ENCODE measurements at regions of chr3 and their contacts with region 1.

Region 1: DNA sequence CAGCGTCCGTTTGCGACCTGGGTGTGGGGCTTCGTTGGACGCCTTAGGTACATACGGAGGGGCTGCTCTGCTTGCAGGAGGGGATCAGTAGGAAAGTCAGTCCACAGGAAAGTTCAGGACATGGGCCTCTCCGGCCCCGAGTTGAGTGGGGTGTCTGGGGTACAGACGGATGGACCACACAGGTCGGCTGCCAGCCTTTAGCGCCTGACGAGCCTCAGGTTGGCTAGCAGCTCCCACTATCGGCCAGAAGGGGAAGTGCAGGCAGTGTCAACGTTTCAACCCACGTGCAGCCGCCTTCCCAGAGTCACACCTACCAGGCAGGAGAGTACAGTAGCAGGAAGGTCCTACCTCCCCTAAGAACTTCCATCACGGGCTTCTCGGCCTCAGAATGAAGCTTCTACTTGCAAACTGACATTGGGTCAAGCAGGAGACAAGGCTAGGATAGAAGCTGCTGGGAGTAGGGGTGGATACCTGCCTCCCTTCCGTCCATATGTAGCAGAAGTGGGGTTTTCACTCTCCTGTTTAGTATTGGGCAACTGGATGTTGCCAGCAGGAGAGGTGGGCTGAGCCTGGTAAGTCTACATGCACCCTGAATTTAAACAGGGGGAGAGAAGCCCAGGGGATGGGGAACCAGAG is 1.8 kb upstream of the SCN5A start:
- DNase-seq: peak; percentile 45 to 70
- H3K4me3 ChIP-seq: no peak overlapping the region
- H3K27ac ChIP-seq: no peak overlapping the region
- H3K4me1 ChIP-seq: peaks cover 0 to 26% (median 18%) of the 10 kb centered on the region in 4 donors
- H3K27me3 ChIP-seq: peaks cover 0 to 49% of the 10 kb centered on the region in 2 donors
- CTCF ChIP-seq: peak; percentile 87 to 93

Region 2: DNA sequence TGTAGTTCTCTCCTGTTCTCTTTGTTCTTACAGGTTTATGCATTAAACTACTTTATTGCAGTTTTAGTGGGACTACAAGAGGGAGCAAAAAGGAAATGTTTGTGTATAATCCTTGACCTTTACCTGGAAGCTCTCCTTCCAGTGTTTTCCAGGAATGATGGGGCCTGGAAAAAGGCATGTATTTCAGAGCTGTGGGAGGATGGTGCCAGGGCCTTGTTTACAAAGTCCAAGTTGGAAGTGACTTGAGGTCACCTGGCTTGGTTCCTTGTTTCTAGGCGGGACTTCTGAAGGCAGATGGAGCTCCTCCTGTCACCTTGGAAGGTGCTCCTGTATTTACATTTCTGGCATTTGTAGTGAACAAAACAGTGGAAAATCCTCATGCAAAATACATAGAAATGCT is 182.5 kb before region 1 on chr3:
- intact Hi-C with region 1: no loop called
- DNase-seq: no peak
- H3K4me3 ChIP-seq: no peak overlapping the region
- H3K27ac ChIP-seq: no peak overlapping the region
- H3K4me1 ChIP-seq: peaks cover 0 to 14% (median 4%) of the 10 kb centered on the region in 4 donors
- H3K27me3 ChIP-seq: no peaks in the 10 kb centered on the region
- CTCF ChIP-seq: no peak

Region 3: GRCh38 chr3:38521391-38521987 is 129.8 kb before region 1 on chr3:
- intact Hi-C with region 1: loop called (anchors 2 kb)
- DNase-seq: peak in 1 of 2 donors; percentile 55
- H3K4me3 ChIP-seq: no peak overlapping the region
- H3K27ac ChIP-seq: no peak overlapping the region
- H3K4me1 ChIP-seq: peaks cover 0 to 11% (median 4%) of the 10 kb centered on the region in 4 donors
- H3K27me3 ChIP-seq: no peaks in the 10 kb centered on the region
- CTCF ChIP-seq: peak; percentile 79 to 88